ENCODE measurements at regions of chr1 and their contacts with region 1.

Region 1: GRCh38 chr1:184242507-184242943 is 144.3 kb upstream of the C1orf21 start:
- DNase-seq: no peak
- H3K4me3 ChIP-seq: no peak overlapping the region
- H3K27ac ChIP-seq: peak overlapping the region; percentile 35
- H3K4me1 ChIP-seq: peaks cover 17% of the 10 kb centered on the region
- H3K27me3 ChIP-seq: no peaks in the 10 kb centered on the region
- CTCF ChIP-seq: peak; percentile 54

Region 2: GRCh38 chr1:184176058-184176457 is 66.5 kb before region 1 on chr1:
- intact Hi-C with region 1: no loop called
- DNase-seq: no peak
- H3K4me3 ChIP-seq: no peak overlapping the region
- H3K27ac ChIP-seq: no peak overlapping the region
- H3K4me1 ChIP-seq: no peaks in the 10 kb centered on the region
- H3K27me3 ChIP-seq: no peaks in the 10 kb centered on the region
- CTCF ChIP-seq: no peak

Region 3: DNA sequence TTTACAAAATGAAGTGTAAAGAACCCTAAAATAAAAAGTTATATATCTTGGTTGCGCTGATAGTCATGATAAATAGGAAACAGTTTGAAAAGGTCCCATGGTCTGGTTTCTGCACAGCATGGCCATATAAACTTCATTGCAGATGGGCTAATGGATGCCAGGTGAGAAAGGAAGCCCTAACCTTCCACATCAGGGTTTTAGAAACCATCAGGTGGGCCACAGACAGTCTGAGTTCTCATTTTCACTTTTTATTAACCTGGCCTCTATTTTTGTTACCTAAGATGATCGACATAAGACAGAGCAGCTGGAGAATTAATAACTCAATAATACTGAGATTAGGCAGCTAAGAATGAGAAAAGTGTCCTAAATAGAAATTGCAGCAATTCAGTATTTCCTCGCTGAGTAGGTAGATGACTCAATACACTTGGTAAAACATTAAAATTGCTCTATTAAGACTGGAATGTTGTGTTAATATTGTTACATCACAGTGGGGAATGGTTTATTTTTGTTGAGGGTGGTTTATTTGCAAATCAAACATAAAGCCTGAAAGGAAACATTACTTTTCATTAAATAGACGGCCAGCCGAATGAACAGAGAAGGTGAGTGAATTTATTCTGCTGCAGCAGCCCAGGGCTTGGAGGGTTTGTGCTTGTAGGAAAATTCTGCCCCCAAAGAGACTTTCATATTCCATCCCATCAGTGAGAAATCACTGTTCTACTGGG is 165.5 kb after region 1 on chr1:
- intact Hi-C with region 1: no loop called
- DNase-seq: no peak
- H3K4me3 ChIP-seq: no peak overlapping the region
- H3K27ac ChIP-seq: peak overlapping the region; percentile 34
- H3K4me1 ChIP-seq: peaks cover 66% of the 10 kb centered on the region
- H3K27me3 ChIP-seq: no peaks in the 10 kb centered on the region
- CTCF ChIP-seq: no peak

Region 4: DNA sequence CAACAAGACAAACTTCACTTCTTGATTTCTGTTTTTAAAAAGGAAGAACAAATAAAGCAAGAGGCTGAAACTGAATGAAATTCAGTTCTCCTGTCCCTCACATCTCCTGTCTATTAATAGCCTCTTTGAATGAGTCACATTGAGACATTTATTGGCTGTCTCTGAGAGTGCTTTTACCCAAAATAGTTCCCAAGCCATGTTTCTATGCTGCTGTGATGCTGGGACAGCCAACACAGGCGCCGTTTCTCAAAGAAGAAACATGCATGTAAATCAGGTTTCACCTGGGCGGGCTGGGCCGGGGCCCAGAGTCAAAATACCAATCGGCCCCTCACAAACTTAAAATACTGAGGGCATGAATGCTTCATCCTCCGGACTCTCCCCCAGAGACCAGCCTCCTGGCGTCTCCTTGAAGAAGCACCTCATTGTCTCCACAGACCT is 406.9 kb after region 1 on chr1:
- intact Hi-C with region 1: no loop called
- DNase-seq: no peak
- H3K4me3 ChIP-seq: peak overlapping the region; percentile 3
- H3K27ac ChIP-seq: peak overlapping the region; percentile 81
- H3K4me1 ChIP-seq: peaks cover 31% of the 10 kb centered on the region
- H3K27me3 ChIP-seq: no peaks in the 10 kb centered on the region
- CTCF ChIP-seq: no peak

Region 5: GRCh38 chr1:184664042-184664655 is 421.6 kb after region 1 on chr1:
- intact Hi-C with region 1: loop called (anchors 10 kb)
- DNase-seq: peak; percentile 79
- H3K4me3 ChIP-seq: peak overlapping the region; percentile 63
- H3K27ac ChIP-seq: peak overlapping the region; percentile 21
- H3K4me1 ChIP-seq: peaks cover 15% of the 10 kb centered on the region
- H3K27me3 ChIP-seq: no peaks in the 10 kb centered on the region
- CTCF ChIP-seq: peak; percentile 97